ENCODE measurements at regions of chr2 and their contacts with region 1.

Region 1: GRCh38 chr2:165953655-165954606 is at the start of gene TTC21B:
- DNase-seq: peak; percentile 97
- ATAC-seq: peak; percentile 96 to 99 (median 98)
- H3K4me3 ChIP-seq: peak within 1 kb of the TSS; percentile 71 to 79 (median 75)
- H3K27ac ChIP-seq: peak within 1 kb of the TSS; percentile 75 to 87 (median 87)
- H3K4me1 ChIP-seq: peaks cover 0 to 13% (median 3%) of the 10 kb centered on the region in 4 donors
- H3K27me3 ChIP-seq: no peaks in the 10 kb centered on the region
- CTCF ChIP-seq: peak; percentile 72 to 88 (median 82)
- POLR2A ChIP-seq: peak; percentile 86
- total RNA-seq, gene TTC21B: 4.7 to 8.9 (median 7.2) TPM

Region 2: DNA sequence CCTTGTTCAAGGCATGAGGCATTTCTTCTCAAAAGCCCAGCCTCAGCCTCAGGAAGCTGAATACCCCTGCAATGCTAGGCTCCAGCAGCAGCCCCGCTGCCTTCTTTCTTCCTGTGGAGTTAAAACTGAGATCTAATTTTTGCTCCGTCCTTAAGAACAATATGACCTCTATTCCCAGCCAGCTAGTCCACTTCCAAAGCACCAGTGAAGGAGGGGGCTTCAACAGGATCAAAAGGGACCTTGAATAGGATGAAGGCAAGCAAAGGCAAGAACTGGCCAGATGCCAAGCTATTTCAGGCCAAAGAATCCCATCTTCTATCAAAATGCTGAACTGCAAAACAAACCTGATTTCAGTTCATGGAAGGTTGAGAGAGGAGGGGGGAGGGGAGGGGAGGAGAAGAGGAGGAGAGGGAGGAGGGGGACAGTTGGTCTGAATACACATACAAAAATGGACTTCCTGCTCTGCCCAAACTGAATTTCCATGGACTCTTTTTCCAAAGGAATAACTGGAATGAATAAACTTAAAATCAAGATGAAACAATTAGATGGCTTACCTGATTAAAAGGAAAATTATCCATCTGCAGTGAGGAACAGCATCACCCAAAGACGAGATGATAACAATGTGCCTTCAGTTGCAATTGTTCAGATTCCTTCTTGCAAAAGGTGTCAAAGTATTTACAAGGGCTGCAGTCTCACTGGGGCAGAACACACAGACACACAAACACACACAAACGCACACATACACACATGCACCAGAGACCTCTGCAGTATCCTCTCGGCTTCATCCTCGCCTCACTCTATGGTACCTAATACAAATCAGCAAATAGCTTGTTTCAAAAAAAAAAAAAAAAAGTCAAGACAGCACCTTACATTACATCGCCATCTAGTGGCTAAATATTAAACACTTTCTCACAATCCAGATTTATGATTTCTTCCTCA is 173.6 kb after region 1 on chr2 and contains the start of gene SCN1A:
- intact Hi-C with region 1: loop called in 1 of 2 experiments (anchors 10 kb)
- DNase-seq: no peak
- ATAC-seq: peak; percentile 64 to 78 (median 74)
- H3K4me3 ChIP-seq: no peak within 1 kb of the TSS
- H3K27ac ChIP-seq: no peak within 1 kb of the TSS
- H3K4me1 ChIP-seq: no peaks in the 10 kb centered on the region
- H3K27me3 ChIP-seq: no peaks in the 10 kb centered on the region
- CTCF ChIP-seq: peak; percentile 44 to 73 (median 66)
- POLR2A ChIP-seq: no peak
- total RNA-seq, gene SCN1A: not detected

Region 3: DNA sequence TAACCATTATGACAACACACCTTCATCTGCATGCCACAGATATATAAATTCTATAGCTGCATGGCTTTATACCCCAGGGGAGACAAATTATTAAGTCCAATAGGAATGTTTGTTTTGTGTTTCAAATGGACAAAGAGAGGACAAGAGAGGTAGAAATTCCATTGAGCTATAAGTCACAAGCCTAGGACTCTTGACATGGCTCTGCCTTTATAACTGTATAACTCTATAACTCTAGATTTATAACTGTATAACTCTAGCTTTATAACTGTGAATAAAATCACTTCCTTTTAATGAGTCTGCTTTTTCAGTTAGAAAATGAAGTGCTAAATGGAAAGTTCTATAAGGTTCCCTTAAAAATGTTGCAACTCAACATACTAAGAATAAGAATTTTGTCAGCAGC is 315.4 kb after region 1 on chr2:
- intact Hi-C with region 1: no loop called
- DNase-seq: no peak
- ATAC-seq: no peak
- H3K4me3 ChIP-seq: no peak overlapping the region
- H3K27ac ChIP-seq: no peak overlapping the region
- H3K4me1 ChIP-seq: no peaks in the 10 kb centered on the region
- H3K27me3 ChIP-seq: no peaks in the 10 kb centered on the region
- CTCF ChIP-seq: no peak
- POLR2A ChIP-seq: no peak